Activated B cell treated with CpG ODN at 0.5 μM for 24 hours (primary cell): ENCODE measurements at regions of chr20 and their contacts with region 1.

Region 1: DNA sequence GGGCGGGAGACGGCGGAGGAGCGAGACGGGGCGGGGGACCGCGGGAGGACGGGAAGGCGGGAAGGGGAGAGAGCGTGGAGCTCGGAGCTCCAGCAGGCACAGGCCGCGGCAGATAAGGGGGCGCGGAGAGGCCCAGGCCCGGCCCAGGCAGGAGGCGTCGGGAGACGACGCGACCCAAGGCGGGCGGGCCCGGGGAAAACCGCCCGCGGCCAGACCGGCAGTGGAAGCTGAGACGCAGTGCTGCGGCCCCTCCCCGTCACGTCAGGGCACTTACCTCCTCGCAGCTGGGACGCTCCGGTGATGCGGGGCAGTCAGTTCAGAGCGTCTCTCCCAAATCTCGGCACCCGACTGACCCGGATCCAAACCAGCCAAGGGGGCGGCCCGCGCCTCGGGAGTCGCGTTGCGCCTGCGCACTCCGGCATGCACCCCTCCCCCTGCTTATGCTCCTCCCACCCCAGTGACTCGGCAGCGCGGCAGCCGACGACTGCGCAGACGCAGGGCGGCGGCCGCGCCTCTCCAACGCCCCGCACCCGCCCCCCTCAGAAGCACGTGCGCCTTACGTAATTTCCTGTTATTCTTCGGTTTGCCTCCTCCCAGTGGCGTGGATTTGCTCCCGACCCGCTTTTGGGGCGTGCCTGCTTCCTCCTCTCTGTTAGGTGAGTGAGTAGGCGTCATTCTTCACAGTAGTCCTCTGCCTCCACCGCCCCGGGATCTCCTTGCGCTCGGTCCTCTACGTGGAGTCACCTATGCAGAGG is at the start of gene OSER1:
- DNase-seq: peak; percentile 99
- ATAC-seq: peak; percentile 80
- H3K4me3 Mint-ChIP-seq: peak within 1 kb of the TSS; percentile 98
- H3K27ac Mint-ChIP-seq: peak within 1 kb of the TSS; percentile 98
- H3K4me1 Mint-ChIP-seq: peaks cover 65% of the 10 kb centered on the region
- H3K27me3 Mint-ChIP-seq: no peaks in the 10 kb centered on the region
- CTCF ChIP-seq: no peak
- total RNA-seq, gene OSER1: 47.3 and 48.9 TPM in 2 replicates

Region 2: GRCh38 chr20:43514062-43514999 is 696.3 kb before region 1 on chr20:
- CTCF ChIA-PET with region 1: no interaction called
- POLR2A ChIA-PET with region 1: no interaction called
- intact Hi-C with region 1: loop called (anchors 1 kb)
- DNase-seq: peak; percentile 83
- ATAC-seq: peak; percentile 89
- H3K4me3 Mint-ChIP-seq: peak overlapping the region; percentile 93
- H3K27ac Mint-ChIP-seq: peak overlapping the region; percentile 88
- H3K4me1 Mint-ChIP-seq: peaks cover 22% of the 10 kb centered on the region
- H3K27me3 Mint-ChIP-seq: peaks cover 11% of the 10 kb centered on the region
- CTCF ChIP-seq: no peak

Region 3: GRCh38 chr20:43666376-43667328 is 543.9 kb before region 1 on chr20 and contains the start of gene MYBL2:
- CTCF ChIA-PET with region 1: no interaction called
- POLR2A ChIA-PET with region 1: no interaction called
- intact Hi-C with region 1: loop called (anchors 5 kb)
- DNase-seq: peak; percentile 77
- ATAC-seq: peak; percentile 78
- H3K4me3 Mint-ChIP-seq: peak within 1 kb of the TSS; percentile 89
- H3K27ac Mint-ChIP-seq: peak within 1 kb of the TSS; percentile 92
- H3K4me1 Mint-ChIP-seq: peaks cover 54% of the 10 kb centered on the region
- H3K27me3 Mint-ChIP-seq: no peaks in the 10 kb centered on the region
- CTCF ChIP-seq: no peak
- total RNA-seq, gene MYBL2: 99.5 and 102 TPM in 2 replicates

Region 4: DNA sequence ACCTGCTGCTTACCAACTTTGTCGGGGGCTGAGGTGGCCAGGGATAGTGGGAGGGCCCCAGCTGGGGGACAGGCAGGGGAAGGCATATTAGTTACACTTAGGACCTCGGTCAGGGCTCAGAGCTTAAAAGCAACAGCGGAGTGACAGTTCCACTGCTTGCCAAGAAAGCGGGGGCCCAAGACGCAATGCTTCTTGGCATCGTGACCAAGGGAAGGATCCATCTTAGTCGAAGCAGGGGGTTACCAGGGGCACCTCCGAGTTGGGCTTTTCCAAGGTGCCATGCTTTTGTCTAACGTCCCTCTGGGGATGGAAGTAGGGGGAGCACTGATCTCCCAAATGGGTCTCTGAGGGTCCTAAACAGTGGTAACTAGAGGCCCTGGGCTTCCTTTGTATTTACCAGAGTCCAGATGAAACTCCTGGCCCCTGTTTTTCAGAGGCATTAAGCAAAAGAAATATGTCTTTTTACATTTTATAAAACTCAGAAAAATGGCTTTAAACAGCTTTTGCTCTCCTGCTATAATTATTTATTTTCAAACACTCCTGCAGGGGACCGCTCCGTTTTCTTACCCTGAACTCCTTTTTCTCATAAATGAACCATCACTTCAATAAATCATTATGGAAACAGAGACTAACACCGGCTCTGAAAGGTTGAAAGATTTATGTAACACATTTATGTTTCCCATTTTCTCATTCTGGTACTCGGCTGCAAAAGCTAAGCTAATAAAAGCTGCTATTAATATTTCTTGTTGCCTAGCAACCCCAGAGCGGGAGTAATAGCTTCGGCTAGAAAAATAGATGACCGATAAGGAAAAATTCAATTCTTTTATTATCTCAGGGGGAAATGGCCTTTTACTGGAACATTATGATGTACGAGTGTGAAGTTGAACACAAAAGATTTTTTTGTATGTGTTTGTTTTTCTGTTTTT is 195.5 kb before region 1 on chr20:
- CTCF ChIA-PET with region 1: no interaction called
- POLR2A ChIA-PET with region 1: no interaction called
- intact Hi-C with region 1: no loop called
- DNase-seq: no peak
- ATAC-seq: no peak
- H3K4me3 Mint-ChIP-seq: no peak overlapping the region
- H3K27ac Mint-ChIP-seq: no peak overlapping the region
- H3K4me1 Mint-ChIP-seq: peaks cover 8% of the 10 kb centered on the region
- H3K27me3 Mint-ChIP-seq: peaks cover 2% of the 10 kb centered on the region
- CTCF ChIP-seq: no peak

Region 5: GRCh38 chr20:44310664-44311639 is 100.4 kb after region 1 on chr20 and contains the start of gene FITM2:
- CTCF ChIA-PET with region 1: interaction called, 137 read pairs
- POLR2A ChIA-PET with region 1: interaction called, 8 read pairs
- intact Hi-C with region 1: loop called (anchors 1 kb)
- DNase-seq: peak; percentile 99
- ATAC-seq: peak; percentile 97
- H3K4me3 Mint-ChIP-seq: peak within 1 kb of the TSS; percentile 91
- H3K27ac Mint-ChIP-seq: peak within 1 kb of the TSS; percentile 85
- H3K4me1 Mint-ChIP-seq: peaks cover 19% of the 10 kb centered on the region
- H3K27me3 Mint-ChIP-seq: peaks cover 3% of the 10 kb centered on the region
- CTCF ChIP-seq: no peak
- total RNA-seq, gene FITM2: 2.4 and 3.3 TPM in 2 replicates

Region 6: DNA sequence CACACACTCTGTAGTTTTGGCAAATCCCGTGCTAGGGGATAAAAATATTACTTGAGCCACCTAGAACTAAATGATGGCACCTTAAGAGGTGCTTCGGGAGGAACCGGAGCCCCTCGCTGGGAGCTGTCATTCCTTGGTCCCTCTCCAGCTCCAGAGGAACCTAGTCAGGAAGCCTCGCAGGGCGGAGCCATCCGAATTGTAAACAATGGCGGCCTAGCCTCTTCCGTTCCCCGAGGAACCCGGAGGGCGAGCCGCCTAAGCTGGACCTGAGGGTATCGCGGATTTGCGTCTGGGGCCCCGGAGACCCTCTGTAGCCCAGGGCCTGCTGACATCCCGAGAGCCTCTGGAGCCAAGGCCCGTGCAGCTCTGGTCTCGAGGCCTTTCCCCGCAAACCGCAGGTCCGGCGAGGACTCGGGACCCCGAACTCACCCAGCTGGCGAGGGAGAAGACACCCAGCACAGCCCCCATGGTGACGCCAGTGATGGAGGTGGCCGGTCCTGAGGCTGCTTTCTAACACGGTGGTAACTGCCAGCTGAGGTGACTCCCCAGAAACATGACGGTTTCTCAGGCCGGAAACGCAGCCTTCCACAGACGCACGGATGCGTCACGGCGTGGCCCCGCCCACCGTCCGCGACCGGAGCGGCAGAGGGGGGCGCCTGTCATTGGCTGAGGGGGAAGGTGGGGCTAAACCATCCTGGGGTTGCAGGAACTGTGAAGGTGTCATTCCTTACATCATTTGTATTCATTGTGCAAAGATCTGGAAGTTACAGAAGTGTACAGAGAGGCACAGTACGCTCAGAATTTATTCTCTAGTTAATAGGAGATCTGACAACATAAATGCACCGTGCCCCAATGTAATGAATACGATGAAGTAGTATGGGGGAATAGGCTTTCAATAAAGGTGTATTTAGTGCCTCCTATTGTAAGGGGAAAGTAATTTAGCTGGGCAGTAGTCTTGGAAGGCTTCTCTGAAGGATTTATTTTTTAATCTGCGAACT is 311.2 kb after region 1 on chr20 and contains the start of gene SERINC3:
- CTCF ChIA-PET with region 1: no interaction called
- POLR2A ChIA-PET with region 1: interaction called, 3 read pairs
- intact Hi-C with region 1: loop called (anchors 5 kb)
- DNase-seq: peak; percentile 97
- ATAC-seq: peak; percentile 98
- H3K4me3 Mint-ChIP-seq: peak within 1 kb of the TSS; percentile 89
- H3K27ac Mint-ChIP-seq: peak within 1 kb of the TSS; percentile 83
- H3K4me1 Mint-ChIP-seq: peaks cover 44% of the 10 kb centered on the region
- H3K27me3 Mint-ChIP-seq: no peaks in the 10 kb centered on the region
- CTCF ChIP-seq: no peak
- total RNA-seq, gene SERINC3: 38.1 and 41.4 TPM in 2 replicates

Region 7: DNA sequence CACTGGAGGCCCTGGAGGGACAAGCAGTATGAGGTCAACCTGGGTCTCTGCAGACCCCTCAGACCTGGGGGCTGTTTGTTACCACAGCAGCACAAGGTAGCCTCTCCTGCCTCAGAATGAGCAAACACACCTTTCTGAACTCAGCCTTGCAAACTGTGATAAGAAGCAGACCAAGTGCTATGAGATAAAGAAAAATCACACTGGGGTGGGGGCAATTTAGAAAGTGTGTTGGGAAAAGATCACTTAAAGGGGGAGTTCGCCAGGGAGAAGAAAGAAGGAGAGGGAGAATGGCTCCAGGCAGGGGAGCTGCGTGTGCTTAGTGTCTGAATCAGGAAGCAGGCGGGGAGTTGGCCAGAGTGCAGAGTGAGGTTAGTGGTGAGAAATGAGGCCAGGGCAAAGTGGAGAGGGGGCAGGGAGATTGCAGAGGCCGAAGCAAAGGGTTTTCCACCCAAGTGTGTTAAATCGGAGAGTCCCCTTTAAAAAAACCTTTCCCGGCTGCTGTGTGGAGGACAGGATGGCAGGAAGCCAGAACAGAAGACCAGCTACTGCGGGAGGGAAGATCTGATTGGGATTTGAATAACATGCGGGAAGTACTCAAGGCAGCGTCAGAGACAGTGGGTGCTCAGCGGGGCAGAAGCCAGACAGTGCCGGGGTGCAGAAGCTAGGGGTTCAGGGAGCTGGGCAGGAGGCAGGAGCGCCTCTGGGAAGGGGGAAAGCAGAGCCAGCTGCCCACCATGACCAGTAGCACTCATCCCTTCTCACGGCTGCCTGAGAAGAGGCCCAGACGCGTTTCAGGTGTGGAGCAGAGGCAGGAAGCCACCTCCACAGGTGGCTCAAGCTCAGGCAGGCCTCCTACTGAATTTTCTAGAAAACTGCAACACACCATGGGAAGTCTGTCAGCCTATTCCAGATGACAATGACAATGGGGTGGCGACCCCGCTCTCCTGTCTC is 431.9 kb after region 1 on chr20:
- CTCF ChIA-PET with region 1: no interaction called
- POLR2A ChIA-PET with region 1: no interaction called
- intact Hi-C with region 1: loop called (anchors 10 kb)
- DNase-seq: no peak
- ATAC-seq: peak; percentile 15
- H3K4me3 Mint-ChIP-seq: peak overlapping the region; percentile 42
- H3K27ac Mint-ChIP-seq: peak overlapping the region; percentile 73
- H3K4me1 Mint-ChIP-seq: peaks cover 69% of the 10 kb centered on the region
- H3K27me3 Mint-ChIP-seq: no peaks in the 10 kb centered on the region
- CTCF ChIP-seq: no peak

Region 8: DNA sequence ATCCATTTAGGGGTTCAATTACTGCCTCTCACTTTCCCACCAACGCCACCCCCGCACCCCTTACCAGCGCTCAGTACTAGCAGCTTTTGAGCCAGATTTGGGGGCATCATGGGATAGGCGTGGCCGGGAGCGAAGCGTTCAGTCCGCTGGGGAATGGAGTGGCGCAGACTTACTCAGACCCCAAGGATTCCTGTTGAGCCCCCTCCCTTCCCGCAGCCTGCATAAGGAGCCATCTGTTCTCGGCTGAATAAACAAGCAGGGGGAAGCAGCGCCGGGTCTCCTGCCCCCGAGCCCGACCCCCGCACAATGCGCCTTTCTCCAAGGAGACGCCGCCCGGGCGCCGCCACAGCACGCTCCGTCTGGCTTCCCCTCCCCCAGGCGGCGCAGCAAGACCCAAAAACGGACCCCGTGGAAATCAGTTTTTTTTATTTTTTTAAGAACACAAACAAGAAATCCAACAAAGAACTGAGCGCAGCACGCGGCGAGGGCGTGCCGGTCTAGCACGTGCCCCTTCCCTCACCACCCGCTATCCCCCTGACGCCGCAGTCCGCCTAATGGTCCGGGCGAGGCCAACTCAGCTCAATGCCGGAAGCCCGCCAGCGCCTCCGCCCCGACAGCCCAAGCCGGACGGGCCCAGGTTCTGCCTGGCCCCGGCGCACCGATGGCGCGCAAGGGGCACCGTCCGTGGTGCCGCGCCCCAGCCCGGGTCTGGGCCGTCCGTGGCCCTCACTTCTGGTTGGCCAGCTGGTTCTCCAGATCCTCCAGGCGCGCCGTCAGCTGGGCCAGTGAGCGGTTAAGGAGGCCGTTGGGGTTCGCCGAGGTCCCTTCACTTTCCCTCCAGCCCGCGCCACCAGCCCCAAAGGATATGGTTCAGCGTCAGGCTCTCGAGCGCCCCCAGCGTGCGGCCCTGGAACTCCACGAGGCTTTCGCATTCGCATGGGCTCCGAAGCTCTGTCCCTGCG is 1082.7 kb after region 1 on chr20:
- CTCF ChIA-PET with region 1: no interaction called
- POLR2A ChIA-PET with region 1: no interaction called
- intact Hi-C with region 1: loop called (anchors 10 kb)
- DNase-seq: peak; percentile 78
- ATAC-seq: peak; percentile 89
- H3K4me3 Mint-ChIP-seq: peak overlapping the region; percentile 80
- H3K27ac Mint-ChIP-seq: no peak overlapping the region
- H3K4me1 Mint-ChIP-seq: peaks cover 21% of the 10 kb centered on the region
- H3K27me3 Mint-ChIP-seq: peaks cover 27% of the 10 kb centered on the region
- CTCF ChIP-seq: peak; percentile 87